Adrenal gland (tissue), 19 donors: ENCODE measurements at regions of chrX and their contacts with region 1.

Region 1: GRCh38 chrX:134969726-134970125 is 21.1 kb upstream of the SMIM10 start:
- DNase-seq: no peak
- H3K4me3 ChIP-seq: no peak overlapping the region
- H3K27ac ChIP-seq: no peak overlapping the region
- H3K4me1 ChIP-seq: no peaks in the 10 kb centered on the region
- H3K27me3 ChIP-seq: peaks cover 11% of the 10 kb centered on the region
- CTCF ChIP-seq: no peak
- POLR2A ChIP-seq: no peak

Region 2: GRCh38 chrX:135009057-135009610 is 39.4 kb after region 1 on chrX:
- intact Hi-C with region 1: no loop called
- DNase-seq: peak in 6 of 7 donors; percentile 43 to 77 (median 62)
- H3K4me3 ChIP-seq: no peak overlapping the region
- H3K27ac ChIP-seq: peak overlapping the region in 3 of 5 donors; percentile 23 to 60 (median 60)
- H3K4me1 ChIP-seq: no peaks in the 10 kb centered on the region
- H3K27me3 ChIP-seq: no peaks in the 10 kb centered on the region
- CTCF ChIP-seq: no peak
- POLR2A ChIP-seq: no peak

Region 3: DNA sequence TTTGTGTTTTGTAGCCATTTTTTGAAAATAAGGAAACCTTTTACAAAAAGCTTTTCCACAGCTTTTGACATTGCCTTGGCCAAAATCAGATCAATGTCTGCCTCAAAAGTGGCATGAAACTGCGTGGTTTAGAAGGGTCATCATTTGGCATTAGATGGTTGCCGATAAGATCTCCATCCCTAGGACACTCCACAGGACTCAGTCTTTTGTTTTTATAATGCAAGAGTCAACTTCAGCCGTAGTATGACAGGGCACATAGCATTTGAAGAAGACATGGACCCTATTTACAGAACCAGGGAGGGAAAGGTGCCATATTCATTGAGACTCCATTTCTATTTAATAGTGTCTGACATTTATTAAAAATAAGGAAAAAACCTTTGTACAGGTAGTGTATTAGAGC is 80.9 kb after region 1 on chrX:
- intact Hi-C with region 1: no loop called
- DNase-seq: no peak
- H3K4me3 ChIP-seq: peak overlapping the region in 1 of 4 donors; percentile 51
- H3K27ac ChIP-seq: no peak overlapping the region
- H3K4me1 ChIP-seq: no peaks in the 10 kb centered on the region
- H3K27me3 ChIP-seq: no peaks in the 10 kb centered on the region
- CTCF ChIP-seq: no peak
- POLR2A ChIP-seq: no peak

Region 4: GRCh38 chrX:135086197-135086854 is 116.6 kb after region 1 on chrX:
- intact Hi-C with region 1: loop called in 1 of 2 experiments (anchors 5 kb)
- DNase-seq: peak in 6 of 7 donors; percentile 31 to 55 (median 46)
- H3K4me3 ChIP-seq: no peak overlapping the region
- H3K27ac ChIP-seq: no peak overlapping the region
- H3K4me1 ChIP-seq: no peaks in the 10 kb centered on the region
- H3K27me3 ChIP-seq: peaks cover 12% of the 10 kb centered on the region
- CTCF ChIP-seq: peak; percentile 31 to 62 (median 46)
- POLR2A ChIP-seq: no peak

Region 5: GRCh38 chrX:135264211-135264610 is 294.5 kb after region 1 on chrX:
- intact Hi-C with region 1: no loop called
- DNase-seq: no peak
- H3K4me3 ChIP-seq: no peak overlapping the region
- H3K27ac ChIP-seq: no peak overlapping the region
- H3K4me1 ChIP-seq: no peaks in the 10 kb centered on the region
- H3K27me3 ChIP-seq: peaks cover 5% of the 10 kb centered on the region
- CTCF ChIP-seq: no peak
- POLR2A ChIP-seq: no peak